CD8-positive, alpha-beta T cell (primary cell): ENCODE measurements at regions of chr13 and their contacts with region 1.

Region 1: DNA sequence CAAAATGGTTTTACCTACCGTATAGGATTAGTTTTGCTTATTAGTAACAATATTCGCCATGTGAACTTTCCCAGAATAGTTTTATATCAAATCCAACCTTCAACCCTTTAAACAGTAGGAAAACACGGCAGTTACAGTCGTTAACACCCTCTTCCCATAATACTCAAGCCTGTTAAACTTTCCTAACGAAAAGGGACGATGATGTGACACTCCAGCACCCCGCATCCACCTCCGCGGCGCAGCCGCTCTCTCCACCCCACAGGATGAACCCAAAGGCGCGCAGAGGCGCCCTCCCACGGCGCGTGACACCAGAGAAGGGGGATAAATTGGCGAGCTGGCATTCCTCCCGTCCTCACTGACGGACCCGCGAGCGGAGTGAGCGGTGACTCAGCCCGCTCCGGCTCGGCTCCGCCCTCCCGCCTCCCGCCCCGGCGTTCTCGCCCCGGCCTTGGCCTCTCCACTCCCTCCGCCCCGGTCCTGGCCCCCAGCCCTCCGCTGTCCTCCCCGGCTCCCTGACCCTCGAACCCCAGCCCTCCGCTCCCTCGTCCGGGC is 665 bp downstream of the TUBGCP3 start:
- DNase-seq: peak; percentile 9 to 81 (median 68)
- ATAC-seq: peak; percentile 70
- H3K4me3 ChIP-seq: peak overlapping the region; percentile 76 to 83
- H3K4me3 Mint-ChIP-seq: peak overlapping the region; percentile 96
- H3K27ac ChIP-seq: peak overlapping the region; percentile 57 to 58
- H3K27ac Mint-ChIP-seq: peak overlapping the region; percentile 89
- H3K4me1 ChIP-seq: peaks cover 18% of the 10 kb centered on the region
- H3K4me1 Mint-ChIP-seq: peaks cover 44% of the 10 kb centered on the region
- H3K27me3 ChIP-seq: no peaks in the 10 kb centered on the region
- H3K27me3 Mint-ChIP-seq: no peaks in the 10 kb centered on the region
- CTCF ChIP-seq: no peak

Region 2: DNA sequence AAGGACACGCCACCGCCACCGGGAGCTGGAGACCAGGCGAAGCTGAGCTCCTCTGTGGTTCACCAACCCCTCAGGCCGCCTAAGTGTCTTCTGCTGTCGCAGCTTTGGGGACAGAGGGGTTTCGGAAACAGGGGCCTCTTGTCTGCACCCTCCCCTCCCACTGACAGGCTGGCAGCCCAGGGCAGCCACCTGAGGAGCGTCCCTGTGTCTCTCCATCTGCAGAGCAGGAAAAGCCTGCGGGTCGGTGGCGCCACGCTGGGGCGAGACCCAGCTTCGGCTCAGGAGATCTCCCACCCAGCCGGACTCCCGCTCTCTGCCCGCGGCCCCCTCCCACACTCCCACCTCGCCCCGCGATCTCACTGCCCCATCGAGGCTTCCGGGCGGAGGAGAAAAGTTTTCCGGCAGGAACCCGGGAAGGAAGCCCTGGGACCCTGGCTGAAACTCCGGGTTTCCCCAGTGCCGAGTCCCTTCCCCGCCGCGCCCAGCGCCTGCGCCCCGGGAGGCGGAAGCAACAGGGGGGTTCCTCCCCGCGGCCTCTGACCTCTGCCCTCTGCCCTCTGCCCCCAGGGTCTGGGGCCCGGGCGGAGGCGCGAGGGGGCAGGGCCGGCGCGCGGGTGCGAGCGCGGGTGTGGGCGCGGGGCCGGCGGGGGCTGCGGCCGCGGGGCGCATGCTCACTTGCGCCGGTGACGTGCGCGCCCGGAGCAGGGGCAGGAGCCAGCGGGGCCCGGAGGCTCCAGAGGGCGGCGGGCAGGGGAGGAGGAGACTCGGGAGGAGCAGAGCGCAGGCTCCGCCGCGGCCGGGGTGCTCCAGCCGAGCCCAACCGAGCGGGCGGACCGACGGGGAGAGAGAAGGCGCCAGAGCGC is 102.2 kb after region 1 on chr13 and contains the start of gene ATP11A:
- CTCF ChIA-PET with region 1: no interaction called
- POLR2A ChIA-PET with region 1: no interaction called
- intact Hi-C with region 1: loop called (anchors 2 to 5 kb)
- DNase-seq: peak; percentile 40 to 88 (median 70)
- ATAC-seq: peak; percentile 78
- H3K4me3 ChIP-seq: peak within 1 kb of the TSS; percentile 76 to 77
- H3K4me3 Mint-ChIP-seq: peak within 1 kb of the TSS; percentile 87
- H3K27ac ChIP-seq: peak within 1 kb of the TSS; percentile 38 to 88
- H3K27ac Mint-ChIP-seq: peak within 1 kb of the TSS; percentile 86
- H3K4me1 ChIP-seq: peaks cover 24% of the 10 kb centered on the region
- H3K4me1 Mint-ChIP-seq: peaks cover 52% of the 10 kb centered on the region
- H3K27me3 ChIP-seq: no peaks in the 10 kb centered on the region
- H3K27me3 Mint-ChIP-seq: no peaks in the 10 kb centered on the region
- CTCF ChIP-seq: no peak
- total RNA-seq, gene ATP11A: 20.7 to 22.1 TPM